Sciatic nerve (tissue), 2 donors: ENCODE measurements at regions of chr16 and their contacts with region 1.

Region 1: DNA sequence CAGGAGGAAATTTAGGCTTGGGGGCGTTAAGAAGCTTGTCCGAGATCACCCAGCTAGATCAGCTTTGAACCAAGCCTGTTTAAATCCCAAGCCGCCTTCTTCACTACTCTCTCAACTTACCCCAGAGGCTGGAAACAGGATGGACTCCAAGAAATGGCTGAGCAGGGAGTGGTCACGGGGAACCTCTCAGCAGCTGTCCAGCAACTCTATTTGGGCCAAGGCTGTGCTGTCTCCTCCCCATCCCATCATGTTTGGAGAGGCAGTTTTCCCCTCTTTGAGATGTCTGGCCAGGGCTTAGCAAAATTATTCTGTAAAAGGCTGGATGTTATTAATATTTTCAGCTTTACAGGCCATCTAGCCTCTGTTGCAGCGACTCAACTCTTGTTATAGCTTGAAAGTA is 305.7 kb downstream of the RBFOX1 start:
- DNase-seq: no peak
- ATAC-seq: no peak

Region 2: GRCh38 chr16:8408855-8409567 is 770.7 kb after region 1 on chr16:
- intact Hi-C with region 1: no loop called
- DNase-seq: no peak
- ATAC-seq: no peak

Region 3: DNA sequence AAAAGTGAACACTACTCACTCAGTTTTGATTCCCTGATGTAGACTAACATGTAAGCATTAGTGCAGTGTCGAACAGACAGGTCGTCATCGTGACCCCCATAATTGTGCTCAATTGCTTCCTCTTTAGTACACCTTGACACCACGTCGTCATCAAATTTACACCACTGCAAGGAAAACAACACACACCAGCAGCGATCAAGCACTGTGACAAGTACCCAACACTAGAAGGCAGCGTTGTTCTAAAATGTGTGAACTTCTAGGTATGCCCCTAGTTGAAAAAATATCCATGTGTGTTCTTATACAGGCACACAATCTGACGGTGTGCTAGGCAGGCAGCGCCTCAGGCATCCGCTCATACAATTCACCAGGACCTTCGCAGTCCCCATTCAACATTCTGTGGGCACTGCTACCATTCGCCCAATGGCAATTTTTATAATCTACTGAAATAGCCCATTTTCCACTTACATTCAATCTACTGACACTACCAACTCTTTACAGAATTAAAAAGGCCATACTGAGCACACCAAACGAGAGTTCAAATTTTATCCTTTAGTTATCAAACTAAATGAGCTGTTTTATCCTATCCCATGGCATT is 1267.0 kb after region 1 on chr16:
- intact Hi-C with region 1: loop called (anchors 10 kb)
- DNase-seq: no peak
- ATAC-seq: peak; percentile 20